ENCODE measurements at regions of chr4 and their contacts with region 1.

Region 1: DNA sequence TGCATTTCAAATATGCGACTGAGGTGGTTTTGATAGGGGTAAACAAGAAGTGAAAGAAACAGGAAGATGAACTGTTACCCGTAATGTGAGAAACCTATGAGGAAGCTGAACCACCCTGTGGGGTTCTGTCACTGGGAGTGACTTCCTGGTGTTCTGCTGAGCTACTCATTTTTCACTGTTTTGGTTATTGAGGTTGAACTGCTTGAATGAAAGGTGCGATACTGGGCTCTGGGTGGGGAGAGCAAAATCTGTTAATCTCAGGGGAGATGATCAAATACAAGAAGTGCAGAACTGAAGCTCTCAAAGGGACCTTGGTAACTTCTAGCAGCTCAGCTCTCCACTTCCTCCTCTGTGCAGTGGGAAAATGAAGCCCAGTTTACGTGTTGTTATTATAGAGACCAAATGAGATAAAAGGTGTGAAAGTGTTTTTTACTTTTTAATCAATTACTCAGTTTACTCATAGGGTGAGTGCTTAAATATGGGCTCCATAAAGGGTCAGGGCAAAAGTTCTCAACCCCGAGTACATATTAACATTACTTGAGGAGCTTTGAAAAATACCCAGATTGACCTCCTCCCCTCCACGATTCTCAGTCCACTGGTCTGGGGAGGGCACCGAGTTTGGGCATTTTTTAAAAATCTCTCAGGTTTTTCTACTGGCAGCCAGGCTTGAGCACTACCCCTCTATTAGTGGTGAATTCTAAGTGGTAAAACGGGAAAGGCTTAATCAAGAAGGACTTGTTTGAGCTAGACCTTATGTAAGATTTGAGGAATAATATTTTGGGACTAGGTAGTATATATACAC is 66.7 kb downstream of the COQ2 start:
- DNase-seq: peak; percentile 81
- H3K4me3 Mint-ChIP-seq: peak overlapping the region; percentile 22
- H3K27ac Mint-ChIP-seq: peak overlapping the region; percentile 82
- H3K4me1 Mint-ChIP-seq: peaks cover 77% of the 10 kb centered on the region
- H3K27me3 Mint-ChIP-seq: peaks cover 17% of the 10 kb centered on the region

Region 2: GRCh38 chr4:83012687-83013419 is 205.1 kb before region 1 on chr4:
- CTCF ChIA-PET with region 1: no interaction called
- POLR2A ChIA-PET with region 1: interaction called, 17 read pairs
- DNase-seq: peak; percentile 98
- H3K4me3 Mint-ChIP-seq: peak overlapping the region; percentile 88
- H3K27ac Mint-ChIP-seq: peak overlapping the region; percentile 78
- H3K4me1 Mint-ChIP-seq: peaks cover 38% of the 10 kb centered on the region
- H3K27me3 Mint-ChIP-seq: no peaks in the 10 kb centered on the region

Region 3: DNA sequence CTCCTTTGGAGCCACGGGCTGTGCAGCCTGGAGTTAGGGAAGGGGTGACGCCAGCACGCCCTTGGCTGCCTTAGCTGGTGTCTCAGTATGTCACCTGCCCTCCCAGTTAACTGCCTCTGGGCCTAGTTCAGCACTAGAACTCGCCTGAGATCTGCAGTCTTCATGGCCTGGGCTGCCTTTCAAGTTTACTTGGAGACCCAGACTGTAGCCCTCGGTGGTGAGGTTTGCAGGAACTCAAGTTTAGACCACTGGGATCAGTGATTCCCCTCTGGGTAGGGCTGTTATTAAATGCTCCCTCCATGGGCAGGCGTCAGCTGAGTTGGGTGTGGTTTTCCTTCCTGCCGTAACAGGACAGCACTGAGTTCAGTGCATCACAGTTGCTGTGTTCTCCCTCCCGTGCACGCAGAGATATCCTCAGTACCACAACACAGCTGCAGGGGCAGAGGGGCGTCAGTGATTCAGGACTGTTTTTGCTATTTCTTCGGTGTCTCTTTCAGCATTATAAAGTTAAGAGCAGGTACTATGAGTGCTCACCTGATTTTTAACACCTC is 133.9 kb before region 1 on chr4:
- CTCF ChIA-PET with region 1: interaction called, 9 read pairs
- POLR2A ChIA-PET with region 1: interaction called, 21 read pairs
- DNase-seq: peak; percentile 78
- H3K4me3 Mint-ChIP-seq: peak overlapping the region; percentile 16
- H3K27ac Mint-ChIP-seq: peak overlapping the region; percentile 78
- H3K4me1 Mint-ChIP-seq: peaks cover 31% of the 10 kb centered on the region
- H3K27me3 Mint-ChIP-seq: no peaks in the 10 kb centered on the region

Region 4: GRCh38 chr4:83205760-83206159 is 12.2 kb before region 1 on chr4:
- CTCF ChIA-PET with region 1: no interaction called
- POLR2A ChIA-PET with region 1: no interaction called
- DNase-seq: no peak
- H3K4me3 Mint-ChIP-seq: no peak overlapping the region
- H3K27ac Mint-ChIP-seq: no peak overlapping the region
- H3K4me1 Mint-ChIP-seq: peaks cover 12% of the 10 kb centered on the region
- H3K27me3 Mint-ChIP-seq: peaks cover 24% of the 10 kb centered on the region

Region 5: GRCh38 chr4:83231620-83232076 is 13.7 kb after region 1 on chr4:
- CTCF ChIA-PET with region 1: interaction called, 11 read pairs
- POLR2A ChIA-PET with region 1: interaction called, 41 read pairs
- DNase-seq: peak; percentile 67
- H3K4me3 Mint-ChIP-seq: peak overlapping the region; percentile 42
- H3K27ac Mint-ChIP-seq: peak overlapping the region; percentile 53
- H3K4me1 Mint-ChIP-seq: peaks cover 52% of the 10 kb centered on the region
- H3K27me3 Mint-ChIP-seq: peaks cover 71% of the 10 kb centered on the region

Region 6: GRCh38 chr4:83252782-83253405 is 35.0 kb after region 1 on chr4:
- CTCF ChIA-PET with region 1: interaction called, 8 read pairs
- POLR2A ChIA-PET with region 1: interaction called, 16 read pairs
- DNase-seq: peak; percentile 77
- H3K4me3 Mint-ChIP-seq: no peak overlapping the region
- H3K27ac Mint-ChIP-seq: no peak overlapping the region
- H3K4me1 Mint-ChIP-seq: peaks cover 21% of the 10 kb centered on the region
- H3K27me3 Mint-ChIP-seq: peaks cover 16% of the 10 kb centered on the region

Measured in activated CD4-positive, alpha-beta memory T cell treated with anti-CD3 and anti-CD28 coated beads, Interleukin-2, amount 10 ng/mL, durations not matched to agents 7 days and 5 days (primary cell).